T-cell (primary cell): ENCODE measurements at regions of chr7 and their contacts with region 1.

Region 1: GRCh38 chr7:23055582-23056178 is 41.8 kb upstream of the HYCC1 start:
- DNase-seq: peak in 32 of 35 experiments; percentile 4 to 81 (median 39)
- ATAC-seq: peak; percentile 78 to 92 (median 83)
- H3K4me3 ChIP-seq: no peak overlapping the region
- H3K4me3 Mint-ChIP-seq: no peak overlapping the region
- H3K27ac ChIP-seq: no peak overlapping the region
- H3K27ac Mint-ChIP-seq: no peak overlapping the region
- H3K4me1 ChIP-seq: no peaks in the 10 kb centered on the region
- H3K4me1 Mint-ChIP-seq: no peaks in the 10 kb centered on the region
- H3K27me3 ChIP-seq: no peaks in the 10 kb centered on the region
- H3K27me3 Mint-ChIP-seq: peaks cover 0 to 3% of the 10 kb centered on the region in 2 donors

Region 2: GRCh38 chr7:22110227-22110839 is 945.3 kb before region 1 on chr7:
- CTCF ChIA-PET with region 1: no interaction called
- POLR2A ChIA-PET with region 1: no interaction called
- DNase-seq: peak in 34 of 35 experiments; percentile 22 to 87 (median 54)
- ATAC-seq: peak; percentile 63 to 80 (median 72)
- H3K4me3 ChIP-seq: no peak overlapping the region
- H3K4me3 Mint-ChIP-seq: no peak overlapping the region
- H3K27ac ChIP-seq: no peak overlapping the region
- H3K27ac Mint-ChIP-seq: no peak overlapping the region
- H3K4me1 ChIP-seq: no peaks in the 10 kb centered on the region
- H3K4me1 Mint-ChIP-seq: no peaks in the 10 kb centered on the region
- H3K27me3 ChIP-seq: peaks cover 0 to 16% of the 10 kb centered on the region in 2 experiments
- H3K27me3 Mint-ChIP-seq: peaks cover 2 to 3% of the 10 kb centered on the region in 2 donors

Region 3: GRCh38 chr7:22559829-22560489 is 495.7 kb before region 1 on chr7:
- CTCF ChIA-PET with region 1: interaction called, 30 to 51 read pairs
- POLR2A ChIA-PET with region 1: no interaction called
- DNase-seq: peak; percentile 19 to 79 (median 56)
- ATAC-seq: peak; percentile 62 to 94 (median 74)
- H3K4me3 ChIP-seq: no peak overlapping the region
- H3K4me3 Mint-ChIP-seq: no peak overlapping the region
- H3K27ac ChIP-seq: no peak overlapping the region
- H3K27ac Mint-ChIP-seq: no peak overlapping the region
- H3K4me1 ChIP-seq: peaks cover 3 to 22% of the 10 kb centered on the region in 2 experiments
- H3K4me1 Mint-ChIP-seq: peaks cover 27 to 34% (median 28%) of the 10 kb centered on the region in 3 donors
- H3K27me3 ChIP-seq: peaks cover 0 to 22% of the 10 kb centered on the region in 2 experiments
- H3K27me3 Mint-ChIP-seq: peaks cover 13 to 18% of the 10 kb centered on the region in 2 donors

Region 4: DNA sequence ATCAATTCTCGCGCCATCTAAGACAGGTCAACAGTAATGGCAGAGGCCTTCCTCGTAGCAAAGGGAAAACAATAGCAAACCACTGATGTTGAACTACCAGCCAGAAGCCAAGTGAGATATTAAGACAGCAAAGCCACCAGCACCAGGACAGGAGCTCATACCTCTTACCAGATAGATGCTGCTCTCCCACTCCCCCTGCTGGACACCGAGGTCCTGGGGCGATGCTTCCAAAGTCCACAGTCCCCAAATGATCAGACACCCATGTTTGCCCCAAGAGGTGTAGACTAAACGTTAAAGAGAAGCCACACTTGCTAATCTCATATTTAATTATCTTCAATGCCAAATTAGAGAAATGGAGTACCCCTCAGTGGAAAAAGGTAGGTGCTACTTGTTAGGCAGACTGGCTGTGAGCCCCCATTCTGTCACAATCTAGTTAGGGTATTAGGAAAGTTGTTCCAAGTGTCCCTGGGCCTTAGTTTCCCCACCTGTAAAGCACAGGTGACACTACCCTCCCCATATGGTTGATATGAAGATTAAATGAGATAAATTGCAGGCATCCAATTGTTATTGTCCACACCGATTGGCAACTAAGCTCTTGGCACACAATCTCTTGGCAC is 273.0 kb before region 1 on chr7:
- CTCF ChIA-PET with region 1: interaction called in 1 of 2 experiments, 10 read pairs
- POLR2A ChIA-PET with region 1: no interaction called
- DNase-seq: peak; percentile 8 to 77 (median 61)
- ATAC-seq: peak; percentile 65 to 79 (median 68)
- H3K4me3 ChIP-seq: no peak overlapping the region
- H3K4me3 Mint-ChIP-seq: no peak overlapping the region
- H3K27ac ChIP-seq: no peak overlapping the region
- H3K27ac Mint-ChIP-seq: no peak overlapping the region
- H3K4me1 ChIP-seq: no peaks in the 10 kb centered on the region
- H3K4me1 Mint-ChIP-seq: no peaks in the 10 kb centered on the region
- H3K27me3 ChIP-seq: no peaks in the 10 kb centered on the region
- H3K27me3 Mint-ChIP-seq: no peaks in the 10 kb centered on the region

Region 5: DNA sequence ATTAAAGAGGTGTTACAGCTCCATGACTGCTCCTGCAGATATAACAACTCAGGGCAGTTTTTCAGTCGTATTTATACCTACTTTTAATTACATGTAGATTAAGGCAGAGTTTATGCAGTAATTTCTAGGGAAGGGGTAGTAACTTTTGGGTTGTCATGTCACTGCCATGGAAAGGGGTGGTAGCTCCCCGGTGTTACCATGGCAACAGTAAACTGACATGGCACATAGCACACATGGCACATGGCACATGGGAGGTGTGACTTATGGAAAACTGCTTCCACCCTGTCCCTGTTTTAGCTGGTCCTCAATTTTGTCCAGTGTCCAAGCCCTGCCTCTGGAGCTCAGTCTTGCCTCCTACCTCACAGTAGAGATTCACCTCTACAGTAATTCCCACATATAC is 229.1 kb before region 1 on chr7:
- CTCF ChIA-PET with region 1: interaction called in 1 of 2 experiments, 10 read pairs
- POLR2A ChIA-PET with region 1: no interaction called
- DNase-seq: no peak
- ATAC-seq: no peak
- H3K4me3 ChIP-seq: no peak overlapping the region
- H3K4me3 Mint-ChIP-seq: no peak overlapping the region
- H3K27ac ChIP-seq: no peak overlapping the region
- H3K27ac Mint-ChIP-seq: no peak overlapping the region
- H3K4me1 ChIP-seq: peaks cover 12 to 15% of the 10 kb centered on the region in 2 experiments
- H3K4me1 Mint-ChIP-seq: peaks cover 9 to 14% (median 11%) of the 10 kb centered on the region in 3 donors
- H3K27me3 ChIP-seq: peaks cover 8 to 12% of the 10 kb centered on the region in 2 experiments
- H3K27me3 Mint-ChIP-seq: peaks cover 15 to 21% of the 10 kb centered on the region in 2 donors

Region 6: GRCh38 chr7:22854158-22855048 is 201.3 kb before region 1 on chr7:
- CTCF ChIA-PET with region 1: interaction called, 3 to 10 read pairs
- POLR2A ChIA-PET with region 1: no interaction called
- DNase-seq: peak in 33 of 35 experiments; percentile 22 to 78 (median 67)
- ATAC-seq: peak; percentile 38 to 59 (median 54)
- H3K4me3 ChIP-seq: peak overlapping the region; percentile 63 to 81
- H3K4me3 Mint-ChIP-seq: peak overlapping the region; percentile 91 to 95 (median 92)
- H3K27ac ChIP-seq: peak overlapping the region; percentile 73
- H3K27ac Mint-ChIP-seq: peak overlapping the region; percentile 84 to 90
- H3K4me1 ChIP-seq: peaks cover 4 to 25% of the 10 kb centered on the region in 2 experiments
- H3K4me1 Mint-ChIP-seq: peaks cover 20 to 24% (median 23%) of the 10 kb centered on the region in 3 donors
- H3K27me3 ChIP-seq: peaks cover 0 to 6% of the 10 kb centered on the region in 2 experiments
- H3K27me3 Mint-ChIP-seq: peaks cover 0 to 1% of the 10 kb centered on the region in 2 donors

Region 7: DNA sequence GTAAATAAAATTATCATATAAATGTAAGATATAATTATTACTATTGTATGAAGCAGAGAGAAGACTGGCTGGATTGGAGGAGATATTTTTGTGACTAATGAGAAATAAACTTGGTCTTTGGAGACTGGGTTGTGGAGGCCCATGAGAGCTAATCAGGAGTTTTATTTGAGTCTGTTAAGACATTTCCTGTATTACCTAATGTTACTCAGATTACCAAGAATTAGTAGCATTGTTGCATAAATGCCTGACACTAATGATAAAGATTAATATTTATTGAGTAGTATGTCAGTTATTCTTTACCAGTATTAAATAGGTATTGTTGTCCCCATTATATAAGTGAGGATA is 548.6 kb after region 1 on chr7:
- CTCF ChIA-PET with region 1: no interaction called
- POLR2A ChIA-PET with region 1: no interaction called
- DNase-seq: no peak
- ATAC-seq: no peak
- H3K4me3 ChIP-seq: no peak overlapping the region
- H3K4me3 Mint-ChIP-seq: no peak overlapping the region
- H3K27ac ChIP-seq: no peak overlapping the region
- H3K27ac Mint-ChIP-seq: no peak overlapping the region
- H3K4me1 ChIP-seq: no peaks in the 10 kb centered on the region
- H3K4me1 Mint-ChIP-seq: peaks cover 29 to 34% (median 32%) of the 10 kb centered on the region in 3 donors
- H3K27me3 ChIP-seq: no peaks in the 10 kb centered on the region
- H3K27me3 Mint-ChIP-seq: no peaks in the 10 kb centered on the region

Region 8: DNA sequence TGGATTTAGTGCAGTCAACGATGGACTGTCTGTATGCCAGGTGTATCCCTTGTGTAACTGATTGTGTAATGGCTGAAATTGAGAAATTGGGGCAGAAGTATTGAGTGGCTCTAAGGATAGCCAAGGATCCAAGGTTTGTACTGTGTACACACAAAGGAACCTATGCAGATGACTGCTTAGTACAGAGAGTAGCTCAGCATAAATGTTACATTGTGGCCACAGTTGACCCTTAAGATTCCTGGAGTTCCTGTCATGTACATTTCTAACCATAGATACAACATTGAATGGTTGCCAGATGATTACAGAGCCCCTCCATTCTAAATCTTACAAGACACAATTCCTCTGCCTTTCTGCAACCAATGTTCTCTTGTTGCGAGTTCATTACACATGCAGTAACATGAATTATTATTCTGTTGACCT is 566.8 kb after region 1 on chr7:
- CTCF ChIA-PET with region 1: no interaction called
- POLR2A ChIA-PET with region 1: no interaction called
- DNase-seq: no peak
- ATAC-seq: no peak
- H3K4me3 ChIP-seq: no peak overlapping the region
- H3K4me3 Mint-ChIP-seq: no peak overlapping the region
- H3K27ac ChIP-seq: no peak overlapping the region
- H3K27ac Mint-ChIP-seq: no peak overlapping the region
- H3K4me1 ChIP-seq: no peaks in the 10 kb centered on the region
- H3K4me1 Mint-ChIP-seq: peaks cover 5 to 11% (median 5%) of the 10 kb centered on the region in 3 donors
- H3K27me3 ChIP-seq: peaks cover 0 to 2% of the 10 kb centered on the region in 2 experiments
- H3K27me3 Mint-ChIP-seq: no peaks in the 10 kb centered on the region